Endothelial cell of umbilical vein (primary cell): ENCODE measurements at regions of chr7 and their contacts with region 1.

Region 1: DNA sequence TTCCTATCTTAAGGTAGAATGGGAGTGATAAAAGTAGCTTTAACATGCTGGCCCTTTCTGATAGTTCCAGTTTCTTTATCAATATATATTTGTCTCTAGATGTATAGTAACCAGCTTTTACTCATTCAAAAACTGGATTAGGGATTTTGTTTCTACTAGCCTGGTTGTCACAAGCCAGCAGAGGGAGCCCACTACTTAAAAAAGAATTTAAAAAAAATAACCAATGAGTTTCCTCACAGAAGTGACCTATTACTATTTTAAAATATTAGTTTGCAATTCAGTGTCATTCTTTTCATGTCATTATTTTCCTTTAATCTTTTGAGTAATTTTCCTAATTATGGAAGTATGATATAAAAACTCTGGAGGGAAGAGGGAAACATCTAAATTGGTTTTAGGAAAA is 142.1 kb downstream of the PHTF2 start:
- DNase-seq: peak; percentile 47
- H3K4me3 ChIP-seq: no peak overlapping the region
- H3K27ac ChIP-seq: no peak overlapping the region
- H3K4me1 ChIP-seq: peaks cover 2% of the 10 kb centered on the region
- H3K27me3 ChIP-seq: no peaks in the 10 kb centered on the region
- CTCF ChIP-seq: peak; percentile 33 to 49
- POLR2A ChIP-seq: no peak

Region 2: GRCh38 chr7:77657427-77658224 is 283.0 kb before region 1 on chr7:
- CTCF ChIA-PET with region 1: interaction called, 43 read pairs
- POLR2A ChIA-PET with region 1: no interaction called
- dilution Hi-C with region 1: no loop called
- intact Hi-C with region 1: loop called (anchors 5 kb)
- DNase-seq: peak; percentile 57
- H3K4me3 ChIP-seq: no peak overlapping the region
- H3K27ac ChIP-seq: no peak overlapping the region
- H3K4me1 ChIP-seq: no peaks in the 10 kb centered on the region
- H3K27me3 ChIP-seq: no peaks in the 10 kb centered on the region
- CTCF ChIP-seq: peak in 1 of 2 donors; percentile 25
- POLR2A ChIP-seq: no peak

Region 3: DNA sequence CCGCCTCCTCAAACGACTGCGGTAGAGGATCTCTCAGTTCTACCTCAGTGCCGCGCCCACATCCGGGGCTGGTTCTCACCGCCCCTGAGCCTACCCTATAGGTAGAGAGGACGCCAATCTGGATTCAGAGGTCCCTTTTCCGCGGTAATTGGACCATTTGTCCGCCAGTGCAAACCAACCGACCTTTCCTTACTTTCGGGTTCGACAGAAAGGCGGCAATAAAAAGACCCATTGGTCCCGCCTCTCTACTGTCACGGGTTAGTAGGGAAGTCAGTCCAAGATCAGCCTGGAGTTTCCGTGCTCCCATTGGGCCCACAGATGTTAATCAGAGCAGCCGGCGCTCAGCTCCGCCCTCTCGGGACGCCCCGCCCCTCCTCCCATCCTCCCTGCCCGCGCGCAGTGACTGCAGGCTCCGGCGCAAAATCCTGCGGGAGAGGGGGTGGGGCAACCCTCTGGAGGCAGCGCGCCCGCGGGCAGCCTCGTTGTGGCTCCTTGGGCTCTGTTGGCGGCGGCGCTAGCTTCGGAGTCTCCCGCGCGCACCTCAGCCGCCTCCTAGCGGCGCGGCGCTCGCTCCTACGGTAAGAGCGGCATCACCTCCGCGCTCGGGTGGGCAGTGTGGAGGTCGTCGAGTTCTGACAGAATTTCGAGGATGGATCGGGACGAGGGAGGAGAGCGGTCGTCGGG is 142.1 kb before region 1 on chr7 and contains the starts of genes PHTF2 and TMEM60:
- CTCF ChIA-PET with region 1: interaction called, 3 read pairs
- POLR2A ChIA-PET with region 1: no interaction called
- dilution Hi-C with region 1: no loop called
- intact Hi-C with region 1: loop called (anchors 2 kb)
- DNase-seq: peak; percentile 100
- H3K4me3 ChIP-seq: peak within 1 kb of the TSS; percentile 70 to 94 (median 90)
- H3K27ac ChIP-seq: peak within 1 kb of the TSS; percentile 66
- H3K4me1 ChIP-seq: peaks cover 31% of the 10 kb centered on the region
- H3K27me3 ChIP-seq: no peaks in the 10 kb centered on the region
- CTCF ChIP-seq: peak; percentile 41 to 73
- POLR2A ChIP-seq: peak; percentile 15
- total RNA-seq, gene PHTF2: 21.4 TPM in 2 replicates
- total RNA-seq, gene TMEM60: 15.0 and 15.8 TPM in 2 replicates

Region 4: DNA sequence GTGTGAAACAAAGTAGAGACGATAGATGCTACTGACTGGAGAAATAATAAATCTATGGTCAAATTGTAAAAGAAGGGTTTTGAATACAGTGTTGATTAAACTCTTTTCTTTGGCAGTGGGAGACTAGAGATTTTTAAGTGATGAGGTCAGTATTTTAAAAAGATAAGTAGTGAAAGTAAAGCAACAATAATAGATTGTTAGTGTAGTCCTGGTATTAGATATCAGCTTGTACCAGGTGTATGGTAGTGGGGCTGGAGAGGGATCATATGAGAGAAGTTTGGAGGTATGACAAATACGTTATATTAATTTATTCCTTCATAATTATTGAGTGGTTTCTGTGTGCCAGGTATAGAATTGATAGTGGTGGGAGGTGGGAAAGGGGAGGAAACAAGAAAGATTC is 116.9 kb before region 1 on chr7:
- CTCF ChIA-PET with region 1: no interaction called
- POLR2A ChIA-PET with region 1: no interaction called
- dilution Hi-C with region 1: no loop called
- intact Hi-C with region 1: no loop called
- DNase-seq: no peak
- H3K4me3 ChIP-seq: no peak overlapping the region
- H3K27ac ChIP-seq: no peak overlapping the region
- H3K4me1 ChIP-seq: no peaks in the 10 kb centered on the region
- H3K27me3 ChIP-seq: no peaks in the 10 kb centered on the region
- CTCF ChIP-seq: no peak
- POLR2A ChIP-seq: no peak

Region 5: DNA sequence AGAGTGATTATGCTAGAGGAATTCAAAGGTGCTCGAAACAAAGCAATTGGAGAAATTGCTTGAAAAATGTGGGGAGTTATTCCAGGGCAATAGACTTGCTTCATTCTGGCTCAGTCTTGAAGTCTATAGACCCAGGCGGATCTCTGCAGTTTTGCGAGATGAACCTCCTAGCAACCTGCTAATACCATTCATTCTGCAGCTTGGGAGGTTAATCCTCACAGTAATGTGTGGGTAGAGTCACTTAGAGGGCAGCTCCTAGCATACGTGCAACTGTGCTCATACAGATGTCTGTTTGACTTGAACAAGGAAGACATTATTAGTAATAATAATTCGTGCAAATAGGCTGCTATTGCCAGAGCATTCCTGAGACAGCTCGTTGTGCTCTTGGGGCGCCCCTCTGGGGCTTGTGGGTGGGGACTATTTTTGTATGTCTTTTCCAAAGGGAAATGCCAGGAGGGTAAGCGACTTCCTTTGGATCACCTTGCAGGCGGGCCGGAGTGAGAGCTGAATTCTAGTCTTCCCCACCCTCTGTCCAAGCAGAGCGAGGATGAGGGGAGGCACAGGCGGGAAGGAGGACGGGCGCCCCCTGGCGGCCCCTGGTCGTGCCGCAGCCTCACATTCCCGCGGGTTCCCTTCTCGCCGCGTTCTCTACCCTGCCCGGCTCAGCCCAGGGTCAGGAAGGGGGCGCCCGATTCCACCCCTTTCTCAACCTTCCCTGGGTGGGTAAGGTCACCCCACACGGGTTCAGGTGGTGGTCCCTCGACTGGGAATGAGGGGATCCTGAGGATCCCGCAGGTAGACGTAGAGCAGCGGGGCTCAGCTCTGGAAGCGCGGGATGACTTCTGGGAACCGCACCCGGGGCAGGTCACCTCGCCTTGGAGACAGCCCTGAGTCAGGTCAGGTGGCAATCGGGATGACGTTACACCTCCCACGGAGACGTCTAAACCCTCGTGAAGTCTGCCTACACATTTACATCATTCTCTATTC is 99.4 kb after region 1 on chr7:
- CTCF ChIA-PET with region 1: interaction called, 41 read pairs
- POLR2A ChIA-PET with region 1: no interaction called
- dilution Hi-C with region 1: no loop called
- intact Hi-C with region 1: loop called (anchors 1 kb)
- DNase-seq: peak; percentile 6
- H3K4me3 ChIP-seq: no peak overlapping the region
- H3K27ac ChIP-seq: no peak overlapping the region
- H3K4me1 ChIP-seq: no peaks in the 10 kb centered on the region
- H3K27me3 ChIP-seq: peaks cover 2 to 11% of the 10 kb centered on the region in 2 experiments
- CTCF ChIP-seq: peak; percentile 72 to 78
- POLR2A ChIP-seq: no peak

Region 6: GRCh38 chr7:78924581-78924980 is 983.9 kb after region 1 on chr7:
- CTCF ChIA-PET with region 1: no interaction called
- POLR2A ChIA-PET with region 1: no interaction called
- dilution Hi-C with region 1: no loop called
- intact Hi-C with region 1: loop called (anchors 2 kb)
- DNase-seq: no peak
- H3K4me3 ChIP-seq: no peak overlapping the region
- H3K27ac ChIP-seq: no peak overlapping the region
- H3K4me1 ChIP-seq: no peaks in the 10 kb centered on the region
- H3K27me3 ChIP-seq: no peaks in the 10 kb centered on the region
- CTCF ChIP-seq: no peak
- POLR2A ChIP-seq: no peak